ENCODE measurements at regions of chr2 and their contacts with region 1.

Region 1: DNA sequence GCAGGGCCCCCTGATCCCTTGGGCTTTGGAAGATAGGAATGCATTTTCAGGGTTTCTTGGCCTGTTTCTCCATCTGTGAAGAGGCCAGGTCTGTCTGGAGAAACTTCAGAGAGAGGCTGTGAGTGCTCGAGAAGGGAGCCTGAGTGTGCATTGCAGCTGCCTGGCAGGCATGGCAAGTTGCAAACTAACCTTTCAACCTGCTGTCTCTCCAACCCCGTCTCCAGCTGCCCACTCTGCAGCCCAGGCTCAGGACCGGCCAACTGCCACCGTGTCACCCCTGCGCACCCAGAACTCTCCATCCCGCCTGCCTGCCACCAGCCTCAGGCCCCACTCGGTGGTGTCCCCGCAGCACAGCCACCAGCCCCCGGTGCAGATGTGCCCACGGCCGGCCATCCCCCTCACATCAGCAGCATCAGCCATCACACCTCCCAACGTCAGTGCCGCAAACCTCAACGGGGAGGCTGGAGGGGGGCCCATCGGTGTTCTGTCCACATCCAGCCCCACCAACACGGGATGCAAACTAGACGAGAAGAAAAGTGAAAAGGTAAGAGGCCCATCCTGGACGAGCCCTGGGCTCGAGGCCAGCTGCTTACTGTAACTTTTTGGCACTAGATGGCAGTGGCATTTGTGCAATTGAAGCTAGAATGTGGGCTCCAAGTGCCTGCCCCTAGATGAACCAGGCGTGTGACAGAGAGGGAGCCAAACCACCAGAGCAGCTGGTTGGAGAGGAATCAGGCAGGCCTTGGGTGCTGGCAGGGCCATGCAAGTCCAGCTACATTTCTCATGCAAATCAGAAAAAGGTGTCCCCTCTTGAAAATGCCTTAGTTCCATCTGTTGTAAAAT is 164.6 kb downstream of the SEPTIN10 start:
- DNase-seq: peak; percentile 83 to 90
- ATAC-seq: peak; percentile 88 to 89
- H3K4me3 ChIP-seq: no peak overlapping the region
- H3K27ac ChIP-seq: peak overlapping the region; percentile 72 to 88 (median 76)
- H3K4me1 ChIP-seq: peaks cover 40 to 54% of the 10 kb centered on the region in 2 donors
- H3K27me3 ChIP-seq: no peaks in the 10 kb centered on the region
- CTCF ChIP-seq: no peak
- POLR2A ChIP-seq: no peak

Region 2: GRCh38 chr2:109475531-109476210 is 26.5 kb after region 1 on chr2:
- in situ Hi-C with region 1: no loop called
- intact Hi-C with region 1: no loop called
- DNase-seq: no peak
- ATAC-seq: peak; percentile 43 to 70
- H3K4me3 ChIP-seq: no peak overlapping the region
- H3K27ac ChIP-seq: peak overlapping the region in 1 of 4 donors; percentile 33
- H3K4me1 ChIP-seq: peaks cover 10 to 13% of the 10 kb centered on the region in 2 donors
- H3K27me3 ChIP-seq: no peaks in the 10 kb centered on the region
- CTCF ChIP-seq: no peak
- POLR2A ChIP-seq: no peak

Region 3: GRCh38 chr2:109497463-109497862 is 48.3 kb after region 1 on chr2:
- in situ Hi-C with region 1: no loop called
- intact Hi-C with region 1: loop called (anchors 5 kb)
- DNase-seq: peak; percentile 72 to 80
- ATAC-seq: peak; percentile 68 to 91
- H3K4me3 ChIP-seq: no peak overlapping the region
- H3K27ac ChIP-seq: peak overlapping the region; percentile 46 to 83 (median 70)
- H3K4me1 ChIP-seq: peaks cover 33 to 35% of the 10 kb centered on the region in 2 donors
- H3K27me3 ChIP-seq: no peaks in the 10 kb centered on the region
- CTCF ChIP-seq: no peak
- POLR2A ChIP-seq: no peak

Region 4: DNA sequence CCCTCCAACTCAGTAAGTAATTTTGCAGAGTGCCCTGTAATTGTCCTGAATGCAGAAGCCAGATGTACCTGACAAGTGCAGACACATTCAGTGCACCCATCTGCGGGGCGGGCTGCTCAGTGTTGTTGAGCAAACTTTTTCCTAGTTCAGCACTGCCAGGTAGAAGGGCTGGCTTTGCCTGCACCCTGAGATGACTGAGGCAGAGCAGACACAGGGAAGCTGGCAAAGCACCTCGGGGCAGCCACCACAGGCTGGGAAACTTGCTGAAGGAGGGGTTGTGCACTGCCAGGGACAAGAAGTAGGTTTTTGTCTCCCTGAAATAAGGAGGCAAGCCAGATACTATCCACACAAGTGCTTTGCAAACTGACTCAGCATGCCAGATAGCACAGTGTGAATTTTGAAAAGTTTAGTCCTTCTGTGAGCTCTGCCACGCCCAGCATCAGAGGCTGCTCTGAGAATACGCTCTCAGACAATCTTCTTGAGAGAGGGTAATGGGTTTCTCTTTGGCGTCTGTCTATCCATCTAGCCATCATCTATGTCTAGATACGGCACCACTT is 227.3 kb after region 1 on chr2:
- in situ Hi-C with region 1: no loop called
- intact Hi-C with region 1: no loop called
- DNase-seq: no peak
- ATAC-seq: no peak
- H3K4me3 ChIP-seq: no peak overlapping the region
- H3K27ac ChIP-seq: no peak overlapping the region
- H3K4me1 ChIP-seq: no peaks in the 10 kb centered on the region
- H3K27me3 ChIP-seq: no peaks in the 10 kb centered on the region
- CTCF ChIP-seq: no peak
- POLR2A ChIP-seq: no peak

Measured in gastrocnemius medialis (tissue), 4 donors.